A673 (cell line): ENCODE measurements at regions of chr11 and their contacts with region 1.

Region 1: GRCh38 chr11:65165410-65166317 is 4.4 kb upstream of the SPDYC start:
- DNase-seq: no peak
- H3K4me3 ChIP-seq: no peak overlapping the region
- H3K27ac ChIP-seq: no peak overlapping the region
- H3K4me1 ChIP-seq: no peaks in the 10 kb centered on the region
- H3K27me3 ChIP-seq: no peaks in the 10 kb centered on the region
- CTCF ChIP-seq: no peak

Region 2: DNA sequence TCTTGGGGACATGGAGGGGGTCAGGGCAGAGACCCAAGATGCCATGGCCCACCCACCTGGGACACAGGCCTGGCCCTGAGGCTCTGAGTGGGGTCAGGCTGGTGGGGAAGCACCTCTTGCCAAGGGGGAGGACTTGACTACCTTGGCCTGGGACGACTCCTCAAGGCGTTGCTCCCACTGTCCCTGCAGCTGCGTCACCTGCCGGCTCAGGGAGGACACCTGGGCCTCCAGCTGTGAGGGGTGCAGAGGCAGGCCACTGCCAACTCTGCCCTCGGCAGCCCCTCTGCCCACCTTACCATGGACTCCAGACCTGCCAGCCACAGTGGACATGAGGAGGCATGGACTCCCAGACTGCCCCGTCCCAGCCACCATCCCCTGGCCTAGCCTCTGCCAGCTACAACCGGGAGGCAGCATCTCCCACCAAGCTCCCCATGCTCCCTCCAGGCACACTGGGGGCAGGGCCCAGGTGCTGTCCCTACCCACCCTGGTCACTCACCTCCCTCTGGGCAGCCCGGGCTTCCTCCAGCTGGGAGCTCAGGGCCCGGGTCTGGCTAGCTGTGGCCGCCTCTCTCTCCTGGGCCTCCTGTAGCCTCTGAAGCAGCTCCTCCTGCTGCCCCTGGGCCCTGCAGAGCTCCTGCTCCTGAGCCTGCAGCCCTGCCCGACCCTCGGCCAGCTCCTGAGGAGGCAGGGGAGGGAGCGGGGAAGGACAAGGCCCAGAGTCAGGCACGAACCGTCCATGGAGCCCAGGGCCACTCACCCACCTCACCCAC is 329.9 kb before region 1 on chr11:
- CTCF ChIA-PET with region 1: no interaction called
- POLR2A ChIA-PET with region 1: interaction called, 14 read pairs
- intact Hi-C with region 1: no loop called
- DNase-seq: no peak
- H3K4me3 ChIP-seq: no peak overlapping the region
- H3K27ac ChIP-seq: no peak overlapping the region
- H3K4me1 ChIP-seq: no peaks in the 10 kb centered on the region
- H3K27me3 ChIP-seq: no peaks in the 10 kb centered on the region
- CTCF ChIP-seq: no peak